Heart right ventricle (tissue), 16 donors: ENCODE measurements at regions of chr14 and their contacts with region 1.

Region 1: GRCh38 chr14:38309522-38310277 is 53.8 kb upstream of the CLEC14A start:
- DNase-seq: no peak
- ATAC-seq: peak in 6 of 8 donors; percentile 27 to 76 (median 58)
- H3K4me3 ChIP-seq: peak overlapping the region in 1 of 10 donors; percentile 8
- H3K27ac ChIP-seq: peak overlapping the region; percentile 1 to 89 (median 70)
- H3K4me1 ChIP-seq: peaks cover 0 to 38% (median 12%) of the 10 kb centered on the region in 9 donors
- H3K27me3 ChIP-seq: no peaks in the 10 kb centered on the region
- CTCF ChIP-seq: no peak

Region 2: GRCh38 chr14:38290601-38291190 is 19.0 kb before region 1 on chr14:
- intact Hi-C with region 1: loop called in 1 of 10 experiments (anchors 2 kb)
- DNase-seq: peak in 1 of 2 donors; percentile 20
- ATAC-seq: peak in 7 of 8 donors; percentile 65 to 95 (median 90)
- H3K4me3 ChIP-seq: peak overlapping the region in 1 of 10 donors; percentile 6
- H3K27ac ChIP-seq: peak overlapping the region in 9 of 10 donors; percentile 47 to 81 (median 69)
- H3K4me1 ChIP-seq: peaks cover 0 to 32% (median 18%) of the 10 kb centered on the region in 9 donors
- H3K27me3 ChIP-seq: no peaks in the 10 kb centered on the region
- CTCF ChIP-seq: no peak

Region 3: DNA sequence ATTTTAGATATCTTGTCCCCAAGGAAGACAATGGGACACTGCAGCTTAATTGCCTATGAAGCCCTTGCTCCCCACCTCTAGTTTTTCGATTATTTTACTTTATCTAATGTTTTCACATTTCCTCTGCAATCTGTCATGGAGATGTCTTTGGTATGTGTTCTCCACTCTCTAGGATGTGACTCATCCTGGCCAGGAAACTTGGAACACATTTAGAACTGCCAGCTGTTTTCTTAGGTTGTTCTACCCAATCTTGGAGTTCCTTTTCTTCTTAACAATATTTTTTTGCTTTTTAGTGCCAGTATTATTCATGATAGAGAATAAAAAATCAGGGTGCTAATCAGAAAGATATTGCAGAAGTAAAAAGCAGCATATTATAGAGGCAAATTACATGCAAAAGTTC is 47.9 kb after region 1 on chr14:
- intact Hi-C with region 1: loop called in 1 of 10 experiments (anchors 5 kb)
- DNase-seq: peak in 1 of 2 donors; percentile 25
- ATAC-seq: peak; percentile 33 to 94 (median 82)
- H3K4me3 ChIP-seq: no peak overlapping the region
- H3K27ac ChIP-seq: peak overlapping the region in 5 of 10 donors; percentile 31 to 54 (median 47)
- H3K4me1 ChIP-seq: peaks cover 0 to 20% (median 0%) of the 10 kb centered on the region in 9 donors
- H3K27me3 ChIP-seq: no peaks in the 10 kb centered on the region
- CTCF ChIP-seq: no peak